ENCODE measurements at regions of chr15 and their contacts with region 1.

Region 1: GRCh38 chr15:92034227-92034626 is 180.7 kb downstream of the SLCO3A1 start:
- DNase-seq: no peak
- ATAC-seq: no peak
- H3K4me3 ChIP-seq: no peak overlapping the region
- H3K27ac ChIP-seq: peak overlapping the region; percentile 5 to 70
- H3K4me1 ChIP-seq: peaks cover 5 to 13% of the 10 kb centered on the region in 2 donors
- H3K27me3 ChIP-seq: no peaks in the 10 kb centered on the region

Region 2: DNA sequence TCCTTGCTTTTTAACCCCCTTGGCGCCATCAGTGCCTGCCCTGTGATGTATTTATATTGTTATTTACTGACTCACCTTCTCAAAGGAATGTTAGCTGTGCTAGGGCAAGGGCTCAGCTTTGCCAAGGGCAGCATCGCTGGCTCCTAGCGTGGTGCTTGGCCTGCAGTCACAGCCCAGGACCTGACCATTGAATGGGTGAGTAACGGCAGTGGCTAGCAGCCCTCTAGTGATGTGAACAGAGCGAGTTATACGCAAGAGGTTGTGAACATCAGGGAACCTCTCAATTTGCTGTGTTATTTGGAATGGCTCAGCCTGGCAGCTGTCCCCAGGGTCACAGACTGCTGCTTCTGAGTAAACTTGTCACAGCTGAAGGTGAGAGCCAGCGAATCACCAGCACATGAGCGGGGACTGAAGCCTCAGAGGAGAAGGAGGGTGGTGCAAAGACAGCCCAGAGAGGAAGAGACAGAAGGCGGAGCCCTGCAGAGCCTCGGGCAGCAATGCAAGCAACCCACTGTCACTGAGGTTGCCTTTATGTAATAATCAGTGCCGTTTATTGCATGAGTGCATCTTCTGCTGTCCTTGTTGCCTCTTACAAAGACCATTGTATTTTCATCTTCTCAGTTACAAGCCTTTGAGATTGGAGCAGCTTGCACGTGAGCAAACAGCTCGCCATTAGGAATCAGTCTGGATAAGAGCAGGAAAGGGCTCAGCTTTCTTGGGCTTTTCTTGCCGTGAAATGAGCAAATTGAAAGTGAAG is 22.4 kb before region 1 on chr15:
- intact Hi-C with region 1: no loop called
- DNase-seq: peak; percentile 74 to 83
- ATAC-seq: peak; percentile 51
- H3K4me3 ChIP-seq: no peak overlapping the region
- H3K27ac ChIP-seq: peak overlapping the region; percentile 72 to 93
- H3K4me1 ChIP-seq: peaks cover 6 to 16% of the 10 kb centered on the region in 2 donors
- H3K27me3 ChIP-seq: no peaks in the 10 kb centered on the region

Region 3: DNA sequence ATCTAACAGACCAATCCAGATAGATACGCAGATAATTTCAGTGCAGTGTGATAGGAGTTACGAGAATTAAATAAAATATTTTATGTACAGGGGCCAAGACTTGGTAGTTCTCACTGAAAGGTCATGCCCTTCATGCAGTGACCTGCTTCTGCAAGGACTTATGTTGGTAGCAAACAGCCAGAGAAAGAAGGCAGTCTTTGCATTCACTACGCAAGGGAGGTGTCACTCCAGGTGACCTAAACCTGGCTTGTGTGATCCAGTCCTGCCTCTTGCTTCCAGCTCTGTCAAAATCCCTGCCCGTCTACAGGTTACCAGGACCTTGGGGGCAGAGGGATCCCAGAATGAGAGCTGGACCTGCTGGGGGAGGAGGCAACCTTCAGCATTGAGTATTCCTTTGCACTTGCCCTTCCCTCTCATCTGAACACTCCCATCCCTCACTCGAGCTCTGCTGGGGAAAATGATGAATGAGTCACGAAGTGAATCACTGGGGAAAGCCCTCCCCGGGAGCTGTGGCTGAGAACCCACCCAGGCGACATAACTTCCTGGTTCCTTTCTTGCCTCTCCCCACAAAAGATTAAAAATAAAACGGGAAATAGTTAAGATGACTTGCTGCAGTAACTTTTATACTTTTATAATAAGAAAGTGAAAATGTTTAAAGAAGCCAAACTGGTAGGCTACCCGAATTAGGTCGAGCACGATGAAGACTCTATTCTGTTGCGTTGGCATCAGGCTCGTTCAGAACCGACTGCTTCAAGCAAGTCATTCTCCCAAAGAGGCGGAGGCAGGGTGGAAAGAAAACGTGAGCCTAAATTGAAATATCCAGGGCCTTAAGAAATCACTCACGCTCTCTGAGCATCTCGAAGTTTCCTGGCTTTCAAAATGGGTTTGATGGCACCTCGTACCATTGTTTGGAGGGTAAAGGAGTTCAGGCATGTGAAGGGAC is 35.4 kb after region 1 on chr15:
- intact Hi-C with region 1: loop called (anchors 2 to 5 kb)
- DNase-seq: peak in 1 of 2 donors; percentile 84
- ATAC-seq: peak; percentile 78
- H3K4me3 ChIP-seq: peak overlapping the region; percentile 15 to 27
- H3K27ac ChIP-seq: peak overlapping the region in 1 of 2 donors; percentile 61
- H3K4me1 ChIP-seq: peaks cover 0 to 2% of the 10 kb centered on the region in 2 donors
- H3K27me3 ChIP-seq: no peaks in the 10 kb centered on the region